GM23248 (cell line): ENCODE measurements at regions of chr15 and their contacts with region 1.

Region 1: GRCh38 chr15:45611305-45611704 is 23.5 kb upstream of the SQOR start:
- DNase-seq: peak; percentile 55
- H3K4me3 ChIP-seq: no peak overlapping the region
- H3K27ac ChIP-seq: no peak overlapping the region
- H3K4me1 ChIP-seq: no peaks in the 10 kb centered on the region
- H3K27me3 ChIP-seq: no peaks in the 10 kb centered on the region

Region 2: DNA sequence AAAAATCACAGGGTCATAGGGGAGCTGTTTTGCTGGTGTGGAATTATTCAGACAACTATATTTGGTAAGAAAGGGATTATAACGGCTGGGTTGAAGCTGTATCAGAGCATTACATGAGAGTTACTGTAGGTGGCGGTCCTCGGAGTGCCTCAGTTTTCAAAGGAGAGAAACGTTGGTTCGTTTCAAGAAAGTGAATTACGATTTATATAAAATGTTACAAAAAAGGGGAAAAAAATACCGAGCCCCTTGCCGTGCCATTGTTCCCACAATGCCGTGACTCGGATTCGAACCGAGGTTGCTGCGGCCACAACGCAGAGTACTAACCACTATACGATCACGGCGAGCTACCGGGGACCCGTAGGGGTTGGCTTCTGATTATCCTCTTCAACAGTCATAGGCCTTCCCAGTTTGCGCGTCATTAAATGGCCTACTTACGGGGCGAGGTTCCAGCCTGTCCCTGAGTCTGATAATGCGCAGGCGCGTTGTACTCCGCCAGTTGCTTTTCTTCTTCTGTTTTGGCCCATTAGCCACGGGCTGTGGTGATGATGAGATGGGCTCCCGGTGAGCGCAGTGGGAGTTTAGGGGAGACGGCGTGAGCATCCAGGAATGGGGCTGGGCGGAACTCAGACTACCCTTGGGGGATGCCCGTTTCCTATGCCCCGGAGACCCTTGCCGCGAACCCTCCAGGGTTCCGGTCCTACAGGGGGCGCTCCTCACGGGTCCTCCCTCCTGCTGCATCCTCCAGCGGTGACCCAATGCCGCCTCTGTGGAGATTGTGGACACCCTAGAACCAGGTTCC is 412.8 kb before region 1 on chr15:
- in situ Hi-C with region 1: loop called (anchors 25 kb)
- DNase-seq: peak; percentile 98
- H3K4me3 ChIP-seq: peak overlapping the region; percentile 93
- H3K27ac ChIP-seq: peak overlapping the region; percentile 97
- H3K4me1 ChIP-seq: no peaks in the 10 kb centered on the region
- H3K27me3 ChIP-seq: no peaks in the 10 kb centered on the region

Region 3: DNA sequence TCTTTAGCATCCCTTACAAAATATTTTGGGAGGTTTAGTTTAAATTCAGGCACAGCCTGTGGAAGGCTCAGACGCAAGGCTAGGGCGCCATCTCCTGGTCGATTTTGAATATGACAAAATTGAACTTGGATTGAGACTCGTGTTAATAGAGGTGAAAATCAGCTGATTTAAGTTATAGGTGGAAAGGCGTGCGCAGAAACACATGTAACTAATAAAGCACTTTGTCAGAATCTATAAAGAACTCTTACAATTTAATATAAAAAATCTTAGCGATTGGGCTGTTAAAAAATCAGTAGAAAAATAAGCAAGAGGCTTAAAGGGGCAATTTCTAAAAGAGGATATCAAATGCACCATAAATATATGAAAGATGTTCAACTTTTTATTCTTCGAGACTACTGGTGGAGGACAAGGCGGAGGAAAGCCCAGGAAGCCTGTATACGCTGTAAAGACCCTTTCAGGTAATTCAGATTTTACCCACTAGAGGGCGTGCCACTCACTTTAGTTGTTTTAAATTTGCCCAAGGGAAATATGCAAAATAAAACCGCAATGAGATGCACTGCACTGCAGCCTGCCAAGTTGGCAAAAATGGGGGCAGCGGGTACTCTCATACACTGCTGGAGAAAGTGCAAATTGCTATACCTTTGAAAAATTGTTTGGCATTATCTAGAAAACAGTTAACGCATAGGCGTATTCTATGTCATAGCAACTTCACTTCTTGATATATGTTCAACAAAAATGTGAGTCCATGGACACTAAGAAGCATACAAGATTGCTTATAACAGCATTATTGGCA is 153.5 kb before region 1 on chr15:
- in situ Hi-C with region 1: loop called (anchors 5 kb)
- DNase-seq: peak; percentile 77
- H3K4me3 ChIP-seq: peak overlapping the region; percentile 70
- H3K27ac ChIP-seq: peak overlapping the region; percentile 98
- H3K4me1 ChIP-seq: peaks cover 32% of the 10 kb centered on the region
- H3K27me3 ChIP-seq: no peaks in the 10 kb centered on the region